Adrenal gland (tissue), 19 donors: ENCODE measurements at regions of chr14 and their contacts with region 1.

Region 1: GRCh38 chr14:89237921-89238529 is 179.0 kb downstream of the FOXN3 start:
- DNase-seq: peak in 1 of 7 donors; percentile 41
- H3K4me3 ChIP-seq: no peak overlapping the region
- H3K27ac ChIP-seq: peak overlapping the region in 2 of 5 donors; percentile 2 to 11
- H3K4me1 ChIP-seq: peaks cover 19 to 20% of the 10 kb centered on the region in 2 donors
- H3K27me3 ChIP-seq: no peaks in the 10 kb centered on the region
- CTCF ChIP-seq: peak in 5 of 6 experiments; percentile 38 to 44 (median 43)
- POLR2A ChIP-seq: no peak

Region 2: DNA sequence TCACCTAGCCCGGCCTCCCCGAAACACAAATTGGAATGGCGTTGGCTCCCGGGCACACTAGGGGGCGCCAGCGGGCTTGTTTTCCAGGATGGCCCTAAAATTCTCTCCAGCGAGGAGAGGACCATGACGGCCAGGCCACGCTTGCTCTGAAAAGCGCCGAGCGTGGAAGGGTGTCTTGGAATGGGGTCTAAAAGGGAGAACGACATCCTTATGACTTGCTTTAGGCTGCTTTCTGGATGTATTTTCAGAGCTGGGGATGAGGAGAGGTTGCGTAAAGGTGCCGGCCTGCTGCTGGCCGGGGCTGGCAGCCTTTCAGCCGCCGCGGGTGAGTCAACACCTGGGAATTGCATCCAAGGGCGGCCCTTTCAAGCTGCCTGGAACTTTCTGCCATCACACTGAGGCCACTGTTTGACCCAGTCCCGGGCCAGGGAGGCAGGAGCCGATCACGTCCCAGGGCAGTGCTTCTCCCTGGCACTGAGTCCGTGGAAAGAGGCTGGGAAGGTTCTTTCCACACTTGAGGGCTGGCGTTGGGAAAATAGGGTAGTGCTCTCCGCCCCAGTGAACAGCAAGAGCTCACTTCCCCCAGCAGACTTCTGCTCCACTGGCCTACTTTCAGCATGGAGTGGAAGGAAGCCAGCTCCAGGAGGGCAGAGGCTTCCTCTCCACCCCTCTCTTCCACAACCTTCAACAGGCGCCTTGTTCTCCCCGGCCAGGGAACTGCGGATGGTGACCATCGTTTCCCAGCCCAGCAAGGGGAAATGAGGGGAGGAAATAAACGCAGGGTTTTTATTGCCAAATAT is 197.4 kb before region 1 on chr14:
- intact Hi-C with region 1: loop called in 1 of 2 experiments (anchors 10 kb)
- DNase-seq: peak; percentile 91 to 96 (median 95)
- H3K4me3 ChIP-seq: peak overlapping the region in 2 of 4 donors; percentile 6 to 49
- H3K27ac ChIP-seq: peak overlapping the region; percentile 32 to 94 (median 82)
- H3K4me1 ChIP-seq: peaks cover 8 to 9% of the 10 kb centered on the region in 2 donors
- H3K27me3 ChIP-seq: no peaks in the 10 kb centered on the region
- CTCF ChIP-seq: peak; percentile 87 to 98 (median 96)
- POLR2A ChIP-seq: peak; percentile 22 to 74

Region 3: GRCh38 chr14:89185919-89186855 is 51.8 kb before region 1 on chr14:
- intact Hi-C with region 1: loop called in 1 of 2 experiments (anchors 10 kb)
- DNase-seq: peak; percentile 59 to 86 (median 81)
- H3K4me3 ChIP-seq: no peak overlapping the region
- H3K27ac ChIP-seq: peak overlapping the region; percentile 48 to 86 (median 82)
- H3K4me1 ChIP-seq: peaks cover 18 to 32% of the 10 kb centered on the region in 2 donors
- H3K27me3 ChIP-seq: no peaks in the 10 kb centered on the region
- CTCF ChIP-seq: no peak
- POLR2A ChIP-seq: peak in 1 of 2 donors; percentile 6